ENCODE measurements at regions of chr6 and their contacts with region 1.

Region 1: DNA sequence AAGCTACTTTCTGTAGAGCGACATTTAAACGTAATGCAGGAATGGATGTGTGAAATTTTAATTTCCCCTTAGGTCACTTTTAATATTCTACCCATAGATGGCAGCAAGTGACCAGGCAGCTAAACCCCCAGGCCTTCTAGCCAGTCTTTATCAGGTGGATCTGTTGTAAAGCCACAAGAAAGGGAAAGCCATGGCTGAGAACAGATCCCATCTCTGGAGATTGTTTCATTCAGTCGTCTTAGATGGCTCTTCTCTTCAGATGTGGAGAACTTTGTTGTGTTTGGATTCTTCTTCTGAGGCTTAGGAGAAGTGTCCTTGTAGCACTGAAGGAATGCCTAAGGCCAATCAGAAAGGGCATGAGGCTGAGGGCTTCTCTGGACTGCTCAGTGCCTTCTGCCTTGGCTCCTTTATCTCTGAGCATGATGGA is 15.8 kb upstream of the RNF182 start:
- DNase-seq: no peak
- H3K4me3 ChIP-seq: no peak overlapping the region
- H3K27ac ChIP-seq: no peak overlapping the region
- H3K4me1 ChIP-seq: no peaks in the 10 kb centered on the region
- H3K27me3 ChIP-seq: no peaks in the 10 kb centered on the region
- CTCF ChIP-seq: peak; percentile 65 to 78 (median 71)

Region 2: DNA sequence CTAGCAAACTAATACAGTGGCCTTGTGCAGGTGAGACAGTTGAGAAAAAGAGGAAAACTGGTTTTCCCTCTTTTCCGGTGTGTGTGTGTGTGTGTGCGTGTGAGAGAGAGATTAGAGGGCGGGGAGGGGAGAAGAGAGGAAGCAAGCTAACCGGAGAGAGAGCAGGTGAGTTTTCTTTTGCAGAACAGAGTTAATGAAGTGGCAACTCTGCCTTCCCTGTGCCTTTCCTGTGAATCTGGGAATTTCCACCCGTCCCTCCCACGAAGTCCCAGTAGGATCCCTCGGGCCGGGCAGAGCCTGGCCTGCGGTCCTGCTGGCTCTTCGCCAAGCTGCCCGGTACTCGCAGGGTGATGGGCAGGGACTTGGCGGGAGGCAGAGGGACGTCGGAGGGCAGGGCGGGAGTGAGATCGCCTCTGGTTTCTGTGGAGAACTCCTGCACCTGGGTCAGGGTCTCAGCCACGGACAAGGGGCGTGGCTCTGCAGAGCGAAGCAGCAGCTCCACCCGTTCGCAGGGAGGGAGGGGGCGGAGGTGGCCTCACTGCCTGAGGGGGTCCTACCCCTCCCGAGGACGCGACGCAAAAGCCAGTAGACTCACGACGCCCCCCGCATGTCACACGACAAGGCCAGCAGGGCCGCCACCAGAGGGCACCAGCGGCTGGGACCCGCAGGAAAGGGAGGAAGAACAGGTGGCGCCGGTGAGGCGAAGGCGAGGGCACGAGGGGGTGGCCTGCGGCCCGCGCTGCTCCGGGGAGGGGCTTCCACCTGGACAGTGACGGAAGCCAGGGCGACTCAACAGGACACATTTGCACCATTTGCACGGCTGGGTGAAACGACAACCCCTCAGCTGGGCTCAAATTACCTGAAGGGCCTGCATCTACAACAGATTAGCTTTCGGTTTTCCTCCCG is 35.4 kb before region 1 on chr6:
- intact Hi-C with region 1: no loop called
- DNase-seq: peak in 1 of 2 donors; percentile 67
- H3K4me3 ChIP-seq: peak overlapping the region; percentile 50 to 52
- H3K27ac ChIP-seq: no peak overlapping the region
- H3K4me1 ChIP-seq: peaks cover 0 to 2% of the 10 kb centered on the region in 2 donors
- H3K27me3 ChIP-seq: no peaks in the 10 kb centered on the region
- CTCF ChIP-seq: peak; percentile 39 to 62 (median 47)

Region 3: DNA sequence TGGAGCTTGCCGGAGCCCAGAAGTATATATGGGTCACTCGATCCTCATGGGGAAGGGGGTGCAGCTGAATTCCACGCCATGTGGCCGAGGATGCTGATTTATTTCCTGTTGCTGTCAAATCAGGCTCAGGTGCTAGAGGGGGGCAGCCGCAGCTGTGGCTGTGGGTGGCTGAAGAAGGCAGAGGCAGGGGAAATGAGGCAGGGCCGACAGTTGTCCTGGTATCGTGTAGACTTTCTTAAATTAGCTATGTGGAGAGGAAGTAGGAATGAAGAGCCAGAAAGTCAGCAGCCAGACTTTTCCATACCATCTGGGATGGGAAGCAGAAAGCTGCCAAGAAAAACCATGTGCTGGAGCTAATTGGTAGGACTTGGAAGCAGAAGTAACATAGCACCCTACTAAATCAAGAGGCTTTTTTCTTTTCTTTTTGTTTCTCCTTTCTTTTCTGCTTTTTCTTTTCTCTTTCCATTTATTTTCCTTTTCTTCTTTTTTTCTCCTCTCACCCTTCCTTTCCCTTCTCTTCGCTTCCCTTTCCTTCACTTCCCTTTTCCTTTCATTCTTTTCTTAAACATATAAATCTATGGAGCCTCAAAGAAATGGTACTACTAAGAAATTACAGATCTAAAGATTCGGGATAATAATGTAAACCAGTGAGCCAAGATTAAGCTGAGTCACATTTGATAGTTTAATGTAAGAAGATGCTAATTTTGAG is 118.0 kb after region 1 on chr6:
- intact Hi-C with region 1: no loop called
- DNase-seq: no peak
- H3K4me3 ChIP-seq: no peak overlapping the region
- H3K27ac ChIP-seq: no peak overlapping the region
- H3K4me1 ChIP-seq: no peaks in the 10 kb centered on the region
- H3K27me3 ChIP-seq: no peaks in the 10 kb centered on the region
- CTCF ChIP-seq: no peak

Region 4: DNA sequence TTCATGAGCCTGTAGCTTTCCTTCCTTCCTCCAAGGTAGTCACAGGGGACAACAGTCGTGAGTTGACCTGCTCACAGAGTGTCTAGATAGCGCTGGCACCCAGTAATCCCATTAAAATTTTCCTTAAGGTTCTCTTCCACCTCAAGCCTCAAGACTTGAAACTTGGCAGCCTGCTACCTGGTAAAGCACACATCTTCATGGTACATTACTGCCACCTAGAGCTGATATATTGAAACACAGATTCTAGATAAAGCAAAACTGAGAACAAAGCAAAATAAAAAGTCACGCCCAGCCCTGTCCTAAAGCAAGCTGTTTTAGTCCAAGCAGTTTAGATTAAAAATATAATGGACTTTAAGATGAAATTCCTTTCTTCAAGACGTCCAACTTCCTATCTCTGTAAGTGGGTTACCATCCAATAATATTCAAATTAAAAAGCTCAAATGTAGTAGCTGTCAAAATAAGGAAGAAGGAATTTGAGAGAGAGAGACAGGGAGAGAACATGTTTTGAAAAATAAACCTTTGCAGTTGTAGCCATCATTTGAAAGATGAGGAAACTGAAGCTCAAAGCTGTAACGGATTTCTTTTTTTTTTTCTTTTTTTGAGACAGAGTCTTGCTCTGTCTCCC is 157.9 kb after region 1 on chr6:
- intact Hi-C with region 1: loop called (anchors 1 kb)
- DNase-seq: no peak
- H3K4me3 ChIP-seq: no peak overlapping the region
- H3K27ac ChIP-seq: no peak overlapping the region
- H3K4me1 ChIP-seq: no peaks in the 10 kb centered on the region
- H3K27me3 ChIP-seq: no peaks in the 10 kb centered on the region
- CTCF ChIP-seq: peak; percentile 44 to 72 (median 47)

Region 5: GRCh38 chr6:14144678-14145113 is 235.7 kb after region 1 on chr6:
- intact Hi-C with region 1: loop called (anchors 2 kb)
- DNase-seq: peak in 1 of 2 donors; percentile 19
- H3K4me3 ChIP-seq: no peak overlapping the region
- H3K27ac ChIP-seq: no peak overlapping the region
- H3K4me1 ChIP-seq: no peaks in the 10 kb centered on the region
- H3K27me3 ChIP-seq: no peaks in the 10 kb centered on the region
- CTCF ChIP-seq: peak; percentile 67 to 86 (median 84)

Region 6: GRCh38 chr6:14476793-14477531 is 568.0 kb after region 1 on chr6:
- intact Hi-C with region 1: no loop called
- DNase-seq: no peak
- H3K4me3 ChIP-seq: peak overlapping the region in 1 of 2 donors; percentile 31
- H3K27ac ChIP-seq: no peak overlapping the region
- H3K4me1 ChIP-seq: peaks cover 0 to 3% of the 10 kb centered on the region in 2 donors
- H3K27me3 ChIP-seq: no peaks in the 10 kb centered on the region
- CTCF ChIP-seq: no peak

Measured in ascending aorta (tissue), 2 donors.